ENCODE measurements at regions of chr10 and their contacts with region 1.

Region 1: GRCh38 chr10:43407576-43408330 is 1.2 kb downstream of the HNRNPF start:
- DNase-seq: no peak
- ATAC-seq: peak; percentile 61
- H3K4me3 ChIP-seq: peak overlapping the region; percentile 98
- H3K27ac ChIP-seq: peak overlapping the region; percentile 95
- H3K4me1 ChIP-seq: no peaks in the 10 kb centered on the region; the same call in 1 of the 2 replicates
- H3K27me3 ChIP-seq: no peaks in the 10 kb centered on the region
- CTCF ChIP-seq: peak in 2 of 3 experiments; percentile 23 to 45; a peak in 3 of 6 replicates
- EP300 ChIP-seq: no peak
- POLR2A ChIP-seq: peak; percentile 82
- RAD21 ChIP-seq: no peak

Region 2: GRCh38 chr10:43138021-43138756 is 269.6 kb before region 1 on chr10 and contains the start of gene CSGALNACT2:
- CTCF ChIA-PET with region 1: no interaction called
- POLR2A ChIA-PET with region 1: no interaction called
- RAD21 ChIA-PET with region 1: no interaction called
- SMC1A ChIA-PET with region 1: no interaction called
- in situ Hi-C with region 1: loop called (anchors 25 kb)
- intact Hi-C with region 1: loop called (anchors 5 kb)
- DNase-seq: no peak
- ATAC-seq: peak; percentile 87
- H3K4me3 ChIP-seq: peak within 1 kb of the TSS; percentile 91
- H3K27ac ChIP-seq: peak within 1 kb of the TSS; percentile 82
- H3K4me1 ChIP-seq: peaks cover 32% of the 10 kb centered on the region
- H3K27me3 ChIP-seq: no peaks in the 10 kb centered on the region
- CTCF ChIP-seq: no peak
- EP300 ChIP-seq: no peak
- POLR2A ChIP-seq: peak; percentile 86
- RAD21 ChIP-seq: no peak
- polyA plus RNA-seq, gene CSGALNACT2: 2.5 to 4.0 TPM

Region 3: DNA sequence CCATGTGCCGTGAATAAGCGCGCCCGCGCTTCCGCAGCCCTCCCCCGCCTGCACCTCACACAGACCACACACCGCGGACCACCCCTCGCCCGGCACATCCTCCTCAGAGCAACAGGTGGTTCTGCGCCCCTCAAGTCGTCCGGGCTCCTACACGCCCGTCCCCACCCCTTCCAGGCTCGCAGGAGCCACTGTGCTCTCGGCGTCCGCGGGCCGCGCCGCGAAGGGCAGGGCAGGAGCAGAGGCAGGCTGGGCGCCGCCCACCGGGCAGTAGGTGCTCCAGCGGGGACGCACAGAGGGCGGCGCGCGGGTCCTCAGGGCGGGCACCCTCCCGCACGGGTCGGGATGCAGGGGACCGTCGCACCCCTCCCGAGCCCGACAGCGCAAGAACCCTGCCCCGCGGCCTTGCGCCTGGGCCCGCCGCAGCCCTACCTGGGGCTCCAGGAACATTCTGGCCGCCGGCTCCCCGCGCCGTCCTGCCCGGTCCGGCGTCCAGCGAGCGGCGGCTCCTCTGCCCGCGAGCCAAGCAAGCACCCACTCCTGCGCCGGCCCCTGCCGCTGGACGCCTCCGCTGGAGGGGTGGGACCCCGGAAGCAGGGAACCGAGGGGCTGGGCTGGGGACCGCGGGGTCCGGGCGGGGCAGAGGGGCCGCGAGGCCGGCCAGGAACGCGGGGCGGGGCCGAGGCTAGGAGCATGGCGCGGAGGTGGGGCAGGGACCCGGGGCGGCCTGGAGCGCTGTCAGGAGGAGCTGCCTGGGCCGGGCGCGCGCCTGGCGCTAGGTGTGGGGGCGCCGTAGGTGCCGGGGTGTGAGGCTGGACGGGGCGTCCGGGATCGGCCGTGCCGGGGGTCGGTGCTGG is 178.3 kb before region 1 on chr10:
- CTCF ChIA-PET with region 1: no interaction called
- POLR2A ChIA-PET with region 1: no interaction called
- RAD21 ChIA-PET with region 1: no interaction called
- SMC1A ChIA-PET with region 1: no interaction called
- in situ Hi-C with region 1: no loop called
- intact Hi-C with region 1: no loop called
- DNase-seq: no peak
- ATAC-seq: peak; percentile 20; the same call in 2 of the 3 replicates
- H3K4me3 ChIP-seq: no peak overlapping the region
- H3K27ac ChIP-seq: no peak overlapping the region
- H3K4me1 ChIP-seq: no peaks in the 10 kb centered on the region
- H3K27me3 ChIP-seq: peaks cover 0 to 17% of the 10 kb centered on the region in 2 experiments; a peak in 2 of 4 replicates
- CTCF ChIP-seq: no peak
- EP300 ChIP-seq: no peak
- POLR2A ChIP-seq: no peak
- RAD21 ChIP-seq: no peak

Region 4: DNA sequence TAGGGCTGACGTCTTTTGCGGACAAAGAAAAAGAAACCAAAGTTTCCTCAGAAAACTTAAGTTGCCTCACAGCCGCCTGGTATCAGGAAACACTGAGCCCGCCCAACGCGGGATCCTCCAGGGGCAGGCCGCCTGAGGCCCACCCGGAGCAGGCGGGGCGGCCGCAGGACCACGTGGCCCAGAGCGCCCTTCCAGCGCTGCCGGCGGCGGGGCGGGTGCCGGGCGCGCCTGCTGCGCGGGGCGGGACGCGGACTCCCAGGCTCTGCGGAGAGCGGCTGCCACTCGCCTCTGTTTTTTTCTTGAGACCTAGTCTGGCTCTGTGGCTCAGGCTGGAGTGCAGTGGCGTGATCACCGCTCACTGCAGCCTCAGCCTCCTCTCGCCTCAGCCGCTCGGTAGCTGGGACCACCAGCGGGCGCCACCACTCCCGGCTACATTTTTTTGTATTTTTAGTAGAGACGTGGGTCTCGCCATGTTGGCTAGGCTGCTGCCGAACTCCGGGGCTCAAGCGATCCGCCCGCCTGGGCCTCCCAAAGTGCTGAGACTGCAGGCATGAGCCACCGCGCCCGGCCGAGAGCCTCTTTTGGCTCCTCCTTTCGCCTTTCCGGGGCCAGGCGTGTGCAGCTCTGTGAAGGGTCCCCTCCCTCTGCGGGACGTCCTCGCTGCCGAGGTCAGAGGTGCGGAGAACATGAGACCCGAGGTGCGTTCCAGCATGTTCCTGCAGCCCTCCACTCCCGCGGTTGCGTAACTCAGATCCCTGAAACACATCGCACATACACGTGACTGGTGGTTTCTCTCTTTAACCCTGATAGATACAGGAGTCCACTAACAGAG is 12.8 kb after region 1 on chr10:
- CTCF ChIA-PET with region 1: interaction called, 3 read pairs
- POLR2A ChIA-PET with region 1: interaction called, 3 read pairs
- RAD21 ChIA-PET with region 1: interaction called, 3 read pairs
- SMC1A ChIA-PET with region 1: interaction called, 9 read pairs
- in situ Hi-C with region 1: no loop called
- intact Hi-C with region 1: loop called (anchors 1 kb)
- DNase-seq: no peak
- ATAC-seq: peak; percentile 88
- H3K4me3 ChIP-seq: peak overlapping the region; percentile 82
- H3K27ac ChIP-seq: peak overlapping the region; percentile 64
- H3K4me1 ChIP-seq: peaks cover 21% of the 10 kb centered on the region
- H3K27me3 ChIP-seq: no peaks in the 10 kb centered on the region
- CTCF ChIP-seq: peak in 1 of 3 experiments; percentile 26; a peak in 1 of 6 replicates
- EP300 ChIP-seq: no peak
- POLR2A ChIP-seq: peak; percentile 76
- RAD21 ChIP-seq: no peak

Region 5: GRCh38 chr10:43444313-43444712 is 36.6 kb after region 1 on chr10:
- CTCF ChIA-PET with region 1: no interaction called
- POLR2A ChIA-PET with region 1: no interaction called
- RAD21 ChIA-PET with region 1: no interaction called
- SMC1A ChIA-PET with region 1: no interaction called
- in situ Hi-C with region 1: no loop called
- intact Hi-C with region 1: no loop called
- DNase-seq: no peak
- ATAC-seq: no peak
- H3K4me3 ChIP-seq: no peak overlapping the region
- H3K27ac ChIP-seq: no peak overlapping the region
- H3K4me1 ChIP-seq: no peaks in the 10 kb centered on the region
- H3K27me3 ChIP-seq: no peaks in the 10 kb centered on the region
- CTCF ChIP-seq: no peak
- EP300 ChIP-seq: no peak
- POLR2A ChIP-seq: no peak
- RAD21 ChIP-seq: no peak

Region 6: GRCh38 chr10:43594944-43595589 is 187.3 kb after region 1 on chr10:
- CTCF ChIA-PET with region 1: no interaction called
- POLR2A ChIA-PET with region 1: no interaction called
- RAD21 ChIA-PET with region 1: no interaction called
- SMC1A ChIA-PET with region 1: no interaction called
- in situ Hi-C with region 1: no loop called
- intact Hi-C with region 1: loop called (anchors 5 kb)
- DNase-seq: peak; percentile 84
- ATAC-seq: peak; percentile 95
- H3K4me3 ChIP-seq: peak overlapping the region; percentile 38; the same call in 1 of the 2 replicates
- H3K27ac ChIP-seq: peak overlapping the region; percentile 91
- H3K4me1 ChIP-seq: peaks cover 23% of the 10 kb centered on the region
- H3K27me3 ChIP-seq: no peaks in the 10 kb centered on the region
- CTCF ChIP-seq: no peak
- EP300 ChIP-seq: 0 out of 4 replicates have a peak, but pooled peaks of 1 of the 2 experiments have one; percentile 25
- POLR2A ChIP-seq: no peak
- RAD21 ChIP-seq: 0 out of 2 replicates have a peak, but pooled peaks have one; percentile 4

Region 7: DNA sequence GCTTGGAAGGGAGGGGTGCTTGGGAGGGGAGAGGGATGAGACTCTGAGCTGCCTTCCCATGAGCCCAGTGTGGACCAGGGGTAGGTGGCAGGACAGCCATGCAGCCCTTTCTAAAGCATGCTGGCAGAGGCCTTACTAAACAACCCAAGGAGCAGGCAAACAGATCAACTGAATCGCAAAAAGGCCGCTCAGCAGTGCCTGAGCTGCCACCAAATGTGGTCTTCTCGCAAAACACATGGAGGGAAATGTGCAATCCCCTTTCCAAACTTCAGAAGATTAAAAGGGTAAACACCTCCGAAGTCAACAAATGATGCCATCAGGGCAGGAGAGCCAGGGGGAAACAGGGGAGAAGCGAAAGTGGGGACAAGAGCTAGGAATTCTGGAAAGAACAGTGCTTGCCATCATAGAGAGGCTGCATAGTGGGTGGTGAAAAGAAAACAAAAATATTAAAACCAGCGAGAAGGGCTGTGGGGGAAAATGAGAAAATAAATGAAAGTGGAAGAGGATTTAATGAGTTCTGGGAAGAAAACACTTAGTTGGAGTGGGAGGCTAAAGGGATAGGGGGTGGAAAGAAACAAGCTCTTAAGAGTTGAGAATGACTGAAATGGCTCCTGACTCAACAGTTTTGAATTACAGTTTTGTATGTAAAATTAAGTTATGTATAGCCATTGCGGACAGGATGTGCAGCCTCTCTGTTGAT is 303.2 kb after region 1 on chr10:
- CTCF ChIA-PET with region 1: no interaction called
- POLR2A ChIA-PET with region 1: no interaction called
- RAD21 ChIA-PET with region 1: no interaction called
- SMC1A ChIA-PET with region 1: no interaction called
- in situ Hi-C with region 1: no loop called
- intact Hi-C with region 1: no loop called
- DNase-seq: no peak
- ATAC-seq: no peak
- H3K4me3 ChIP-seq: no peak overlapping the region
- H3K27ac ChIP-seq: no peak overlapping the region
- H3K4me1 ChIP-seq: no peaks in the 10 kb centered on the region
- H3K27me3 ChIP-seq: peaks cover 0 to 2% of the 10 kb centered on the region in 2 experiments; a peak in 2 of 4 replicates
- CTCF ChIP-seq: no peak
- EP300 ChIP-seq: no peak
- POLR2A ChIP-seq: no peak
- RAD21 ChIP-seq: no peak

Region 8: GRCh38 chr10:44959247-44960087 is 1551.7 kb after region 1 on chr10 and contains the start of gene RASSF4:
- CTCF ChIA-PET with region 1: no interaction called
- POLR2A ChIA-PET with region 1: no interaction called
- RAD21 ChIA-PET with region 1: no interaction called
- SMC1A ChIA-PET with region 1: no interaction called
- in situ Hi-C with region 1: loop called (anchors 10 kb)
- intact Hi-C with region 1: no loop called
- DNase-seq: no peak
- ATAC-seq: peak; percentile 92
- H3K4me3 ChIP-seq: peak within 1 kb of the TSS; percentile 92
- H3K27ac ChIP-seq: peak within 1 kb of the TSS; percentile 71
- H3K4me1 ChIP-seq: peaks cover 43% of the 10 kb centered on the region
- H3K27me3 ChIP-seq: no peaks in the 10 kb centered on the region
- CTCF ChIP-seq: no peak
- EP300 ChIP-seq: no peak
- POLR2A ChIP-seq: peak; percentile 98
- RAD21 ChIP-seq: no peak
- polyA plus RNA-seq, gene RASSF4: 3.7 to 4.0 TPM